ENCODE measurements at regions of chr10 and their contacts with region 1.

Region 1: DNA sequence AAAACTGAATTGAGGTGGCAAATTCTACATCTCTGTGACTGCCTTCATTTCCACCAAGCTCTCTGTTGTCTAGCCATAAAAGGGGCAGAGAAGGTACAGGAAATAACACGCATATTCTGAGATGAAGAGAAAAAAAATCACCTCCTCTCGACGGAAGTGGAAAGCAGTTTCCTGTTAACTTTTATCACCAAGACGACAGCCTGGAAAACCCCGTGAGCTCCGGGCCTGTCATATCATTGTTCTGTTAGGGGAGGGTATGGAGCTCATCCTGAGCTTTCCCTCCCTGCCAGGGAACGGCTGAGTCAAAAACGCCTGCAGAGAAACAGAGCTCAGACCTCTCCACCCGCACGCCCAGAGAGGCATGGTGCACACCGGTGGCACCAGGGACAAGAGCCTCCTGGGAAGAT is 200.3 kb downstream of the PRPF18 start:
- DNase-seq: no peak
- H3K4me3 ChIP-seq: no peak overlapping the region
- H3K27ac ChIP-seq: peak overlapping the region; percentile 33
- H3K4me1 ChIP-seq: peaks cover 21% of the 10 kb centered on the region
- H3K27me3 ChIP-seq: no peaks in the 10 kb centered on the region
- CTCF ChIP-seq: no peak
- POLR2A ChIP-seq: no peak

Region 2: DNA sequence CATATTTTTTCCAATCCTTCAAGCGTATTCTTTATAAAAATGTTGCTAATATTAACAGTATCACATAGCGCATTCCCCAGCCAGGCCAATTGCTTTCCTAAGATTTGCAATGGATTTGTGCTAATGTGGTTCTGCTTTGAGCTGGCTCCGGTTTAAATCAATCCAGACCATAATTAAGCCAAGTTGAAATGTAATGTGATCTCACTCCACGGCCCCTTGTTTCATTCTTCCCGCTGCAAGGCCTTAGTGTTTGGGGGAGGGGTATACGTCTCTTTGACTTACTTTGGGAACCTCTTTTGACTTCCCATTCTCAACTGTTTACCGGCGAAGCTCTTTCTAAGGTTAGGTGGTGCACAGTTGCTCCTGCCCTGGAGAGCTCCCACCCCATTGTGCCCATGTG is 113.9 kb before region 1 on chr10:
- intact Hi-C with region 1: no loop called
- DNase-seq: no peak
- H3K4me3 ChIP-seq: no peak overlapping the region
- H3K27ac ChIP-seq: no peak overlapping the region
- H3K4me1 ChIP-seq: peaks cover 10% of the 10 kb centered on the region
- H3K27me3 ChIP-seq: no peaks in the 10 kb centered on the region
- CTCF ChIP-seq: no peak
- POLR2A ChIP-seq: no peak

Region 3: GRCh38 chr10:13956826-13957225 is 169.8 kb after region 1 on chr10:
- intact Hi-C with region 1: loop called (anchors 5 kb)
- DNase-seq: peak in 1 of 2 donors; percentile 98
- H3K4me3 ChIP-seq: peak overlapping the region in 1 of 2 donors; percentile 8
- H3K27ac ChIP-seq: peak overlapping the region; percentile 70
- H3K4me1 ChIP-seq: peaks cover 21% of the 10 kb centered on the region
- H3K27me3 ChIP-seq: no peaks in the 10 kb centered on the region
- CTCF ChIP-seq: peak in 1 of 3 experiments; percentile 57
- POLR2A ChIP-seq: no peak

Region 4: DNA sequence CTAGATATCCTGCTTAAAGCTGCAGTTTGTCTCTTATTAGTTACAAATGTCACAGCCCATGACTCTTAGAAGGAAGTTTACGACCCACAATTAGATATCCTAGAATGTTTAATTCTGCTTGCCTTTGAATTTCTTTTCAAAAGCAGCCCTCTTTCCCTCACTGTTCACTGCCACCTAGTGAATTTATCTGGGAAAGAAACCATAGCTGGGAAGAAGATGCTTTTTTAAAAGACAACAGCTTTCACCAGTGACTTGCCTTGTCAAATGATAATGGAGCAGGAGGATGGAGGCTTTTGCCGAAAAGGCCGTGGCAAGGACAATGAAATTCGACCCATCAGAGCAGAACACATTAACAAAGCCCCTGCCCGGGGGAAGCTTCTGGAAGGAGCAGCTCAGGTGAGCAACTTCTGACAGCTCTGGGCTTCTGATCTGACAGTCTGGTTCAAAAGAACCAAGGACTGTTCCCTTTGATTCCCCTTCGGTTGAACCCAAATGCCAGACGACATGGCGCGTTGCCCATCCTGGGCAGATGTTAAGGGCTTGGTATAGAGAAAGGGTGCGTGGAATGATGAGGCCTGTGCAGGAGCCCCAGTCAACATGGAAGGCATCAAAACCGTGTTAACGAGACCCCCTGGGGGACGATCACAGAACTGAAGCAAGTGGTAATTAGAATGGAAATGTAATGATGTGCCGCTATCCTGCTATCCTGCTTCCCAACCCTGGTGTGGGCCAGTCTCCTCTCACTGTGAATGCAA is 306.9 kb after region 1 on chr10:
- intact Hi-C with region 1: loop called (anchors 5 kb)
- DNase-seq: no peak
- H3K4me3 ChIP-seq: no peak overlapping the region
- H3K27ac ChIP-seq: no peak overlapping the region
- H3K4me1 ChIP-seq: no peaks in the 10 kb centered on the region
- H3K27me3 ChIP-seq: no peaks in the 10 kb centered on the region
- CTCF ChIP-seq: peak; percentile 15 to 51 (median 24)
- POLR2A ChIP-seq: no peak

Measured in vagina (tissue), 2 donors.